Naive thymus-derived CD4-positive, alpha-beta T cell (primary cell): ENCODE measurements at regions of chr1 and their contacts with region 1.

Region 1: DNA sequence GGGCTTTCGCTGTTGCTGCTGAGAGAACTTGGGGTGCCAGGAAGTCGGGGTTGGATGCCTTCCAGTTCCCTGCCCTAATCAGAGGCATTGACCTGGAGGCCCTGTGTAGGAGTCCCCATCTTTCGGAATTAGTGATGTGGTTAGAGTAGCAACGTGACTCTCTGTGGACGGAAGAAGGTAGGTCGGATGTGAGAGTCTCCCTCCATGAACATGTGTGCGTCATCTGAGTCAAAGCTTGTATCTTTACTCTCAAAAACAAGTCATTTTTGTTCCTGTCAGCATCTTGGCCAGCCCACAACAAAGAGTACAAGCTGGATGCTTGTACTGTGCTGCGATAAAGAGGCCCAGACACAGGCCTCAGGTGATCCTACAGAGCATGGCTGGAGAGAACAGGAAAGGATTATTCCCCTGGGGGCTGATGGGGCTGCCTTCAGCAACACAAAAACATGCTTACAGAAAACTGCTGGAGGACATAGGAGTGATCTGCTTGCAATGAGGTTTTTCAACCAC is 31.0 kb upstream of the IL10 start:
- DNase-seq: peak; percentile 42 to 96 (median 93)
- ATAC-seq: peak; percentile 97
- H3K4me3 ChIP-seq: no peak overlapping the region
- H3K4me3 Mint-ChIP-seq: peak overlapping the region in 9 of 10 donors; percentile 32 to 71 (median 57)
- H3K27ac ChIP-seq: peak overlapping the region; percentile 81
- H3K27ac Mint-ChIP-seq: peak overlapping the region; percentile 83 to 99 (median 95)
- H3K4me1 ChIP-seq: peaks cover 34 to 41% of the 10 kb centered on the region in 2 donors
- H3K4me1 Mint-ChIP-seq: peaks cover 29 to 78% (median 77%) of the 10 kb centered on the region in 7 donors
- H3K27me3 ChIP-seq: no peaks in the 10 kb centered on the region
- H3K27me3 Mint-ChIP-seq: peaks cover 0 to 44% (median 0%) of the 10 kb centered on the region in 5 donors

Region 2: GRCh38 chr1:206674745-206675175 is 128.5 kb before region 1 on chr1:
- CTCF ChIA-PET with region 1: no interaction called
- POLR2A ChIA-PET with region 1: no interaction called
- intact Hi-C with region 1: no loop called
- DNase-seq: no peak
- ATAC-seq: no peak
- H3K4me3 ChIP-seq: no peak overlapping the region
- H3K4me3 Mint-ChIP-seq: no peak overlapping the region
- H3K27ac ChIP-seq: no peak overlapping the region
- H3K27ac Mint-ChIP-seq: no peak overlapping the region
- H3K4me1 ChIP-seq: no peaks in the 10 kb centered on the region
- H3K4me1 Mint-ChIP-seq: peaks cover 0 to 5% (median 0%) of the 10 kb centered on the region in 7 donors
- H3K27me3 ChIP-seq: no peaks in the 10 kb centered on the region
- H3K27me3 Mint-ChIP-seq: peaks cover 0 to 12% (median 5%) of the 10 kb centered on the region in 5 donors

Region 3: DNA sequence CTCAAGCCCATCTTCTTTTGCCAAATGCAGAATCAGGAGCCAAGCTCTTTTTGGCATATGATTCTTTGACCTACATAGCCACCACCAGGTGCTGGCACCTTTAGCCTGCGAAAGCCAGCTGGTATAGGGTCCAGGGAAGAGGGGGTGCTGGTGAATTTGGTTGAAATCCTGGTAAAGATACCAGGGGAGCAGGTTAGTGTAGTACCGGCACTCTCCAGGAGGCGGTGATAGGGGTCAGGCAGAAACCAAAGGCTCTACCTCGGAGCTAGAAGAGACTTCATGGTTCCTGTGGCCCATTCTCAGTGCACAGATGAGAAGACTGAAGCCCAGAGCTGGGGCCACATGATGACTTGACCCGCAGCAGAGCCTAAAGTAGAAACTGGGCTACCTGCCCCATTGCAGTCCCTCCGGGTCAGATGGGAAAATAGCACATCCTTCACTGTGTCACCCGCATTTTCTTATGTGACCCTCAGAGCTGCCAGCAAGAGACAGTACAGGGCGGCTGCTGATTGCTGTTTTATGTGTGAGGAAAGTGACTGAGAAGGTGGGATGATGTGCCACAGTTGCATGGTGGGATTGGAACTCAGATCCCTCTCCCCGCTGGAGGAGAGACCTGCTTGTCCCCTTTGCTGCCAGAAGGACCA is 68.7 kb before region 1 on chr1:
- CTCF ChIA-PET with region 1: interaction called, 329 read pairs
- POLR2A ChIA-PET with region 1: interaction called, 148 read pairs
- intact Hi-C with region 1: loop called (anchors 1 kb)
- DNase-seq: peak; percentile 63 to 87 (median 76)
- ATAC-seq: peak; percentile 80
- H3K4me3 ChIP-seq: no peak overlapping the region
- H3K4me3 Mint-ChIP-seq: peak overlapping the region in 4 of 10 donors; percentile 7 to 54 (median 26)
- H3K27ac ChIP-seq: no peak overlapping the region
- H3K27ac Mint-ChIP-seq: peak overlapping the region; percentile 53 to 95 (median 87)
- H3K4me1 ChIP-seq: peaks cover 49 to 50% of the 10 kb centered on the region in 2 donors
- H3K4me1 Mint-ChIP-seq: peaks cover 40 to 60% (median 56%) of the 10 kb centered on the region in 7 donors
- H3K27me3 ChIP-seq: no peaks in the 10 kb centered on the region
- H3K27me3 Mint-ChIP-seq: no peaks in the 10 kb centered on the region

Region 4: DNA sequence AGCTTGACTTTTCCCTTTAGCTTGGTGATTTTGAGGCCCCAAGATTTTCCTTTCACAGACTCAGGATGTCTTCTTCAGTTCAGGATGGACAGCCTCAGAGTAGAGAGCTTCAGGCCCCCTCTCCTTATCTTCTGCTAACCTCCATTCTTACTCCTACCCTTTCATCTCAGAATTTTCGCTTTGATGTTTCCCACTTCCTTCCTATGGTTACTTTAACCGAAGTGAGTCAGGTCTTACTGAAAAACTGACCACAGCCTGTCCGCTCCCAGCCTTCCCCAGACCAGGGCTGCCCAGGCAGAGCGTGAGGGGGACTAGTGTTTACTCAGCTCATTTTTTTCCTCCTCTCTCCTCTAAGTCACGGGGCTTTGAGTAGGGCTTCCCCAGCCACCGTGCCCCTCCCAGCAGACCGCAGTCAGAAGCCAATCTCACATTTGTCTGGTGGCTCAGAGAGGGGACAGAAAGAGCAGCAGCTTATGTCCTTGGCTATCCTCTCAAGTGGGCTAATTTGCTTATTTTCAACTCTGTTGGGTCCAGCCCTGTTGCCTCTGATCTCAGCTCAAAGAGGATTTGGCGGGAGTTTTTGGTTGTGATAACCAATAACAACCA is 36.9 kb before region 1 on chr1:
- CTCF ChIA-PET with region 1: interaction called, 7 read pairs
- POLR2A ChIA-PET with region 1: interaction called, 21 read pairs
- intact Hi-C with region 1: loop called (anchors 1 kb)
- DNase-seq: peak; percentile 43 to 76 (median 71)
- ATAC-seq: peak; percentile 91
- H3K4me3 ChIP-seq: peak overlapping the region; percentile 0
- H3K4me3 Mint-ChIP-seq: peak overlapping the region; percentile 52 to 85 (median 80)
- H3K27ac ChIP-seq: no peak overlapping the region
- H3K27ac Mint-ChIP-seq: peak overlapping the region; percentile 66 to 95 (median 76)
- H3K4me1 ChIP-seq: peaks cover 54 to 65% of the 10 kb centered on the region in 2 donors
- H3K4me1 Mint-ChIP-seq: peaks cover 48 to 80% (median 70%) of the 10 kb centered on the region in 7 donors
- H3K27me3 ChIP-seq: no peaks in the 10 kb centered on the region
- H3K27me3 Mint-ChIP-seq: peaks cover 0 to 44% (median 0%) of the 10 kb centered on the region in 5 donors

Region 5: GRCh38 chr1:206790502-206791250 is 12.6 kb before region 1 on chr1:
- CTCF ChIA-PET with region 1: interaction called, 6 read pairs
- POLR2A ChIA-PET with region 1: interaction called, 14 read pairs
- intact Hi-C with region 1: loop called in 1 of 2 experiments (anchors 1 kb)
- DNase-seq: no peak
- ATAC-seq: no peak
- H3K4me3 ChIP-seq: no peak overlapping the region
- H3K4me3 Mint-ChIP-seq: peak overlapping the region in 7 of 10 donors; percentile 22 to 67 (median 43)
- H3K27ac ChIP-seq: no peak overlapping the region
- H3K27ac Mint-ChIP-seq: peak overlapping the region in 4 of 9 donors; percentile 1 to 77 (median 26)
- H3K4me1 ChIP-seq: peaks cover 37 to 40% of the 10 kb centered on the region in 2 donors
- H3K4me1 Mint-ChIP-seq: peaks cover 35 to 71% (median 66%) of the 10 kb centered on the region in 7 donors
- H3K27me3 ChIP-seq: no peaks in the 10 kb centered on the region
- H3K27me3 Mint-ChIP-seq: peaks cover 0 to 62% (median 0%) of the 10 kb centered on the region in 5 donors

Region 6: DNA sequence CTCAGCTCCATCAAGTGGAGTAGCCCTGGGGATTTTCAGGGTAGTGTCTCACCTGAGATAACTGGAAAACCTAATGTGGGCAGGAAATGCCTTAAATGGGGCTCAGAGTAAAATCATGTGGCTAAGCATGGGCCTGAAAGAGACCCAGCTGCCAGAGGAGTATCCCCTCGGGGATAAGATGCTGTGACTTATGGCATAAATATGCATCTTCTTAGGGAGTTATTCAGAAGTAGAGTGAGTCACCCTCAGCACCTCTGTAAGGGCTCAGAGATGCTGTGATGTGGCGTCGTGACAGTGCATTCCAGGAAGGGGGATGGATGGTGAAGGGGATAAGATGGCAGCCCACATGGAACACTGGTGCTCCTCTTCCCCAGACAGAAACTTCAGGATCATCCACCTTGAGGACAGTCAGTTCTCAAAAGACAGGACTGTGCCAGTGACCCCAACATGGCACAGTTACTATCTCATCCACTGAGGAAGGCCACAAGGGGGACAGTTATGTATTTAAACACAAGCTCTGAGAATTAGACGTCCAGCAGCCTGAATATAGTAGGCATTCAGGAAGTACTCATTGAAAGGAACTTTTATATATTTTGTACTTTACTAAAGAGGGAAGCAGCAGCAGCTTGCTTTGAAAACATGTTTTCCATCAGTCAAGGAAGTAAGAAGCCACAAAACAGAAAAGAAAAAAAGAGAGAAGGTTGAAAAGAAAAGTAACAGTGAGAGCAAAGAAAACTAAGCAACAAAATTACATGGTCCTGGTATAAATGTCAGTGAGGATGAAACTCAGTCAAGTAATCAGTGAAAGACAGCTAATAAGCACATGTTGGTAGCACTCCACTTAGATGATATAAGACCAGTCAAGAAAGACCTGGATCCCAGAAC is 102.2 kb after region 1 on chr1:
- CTCF ChIA-PET with region 1: interaction called, 40 read pairs
- POLR2A ChIA-PET with region 1: interaction called, 17 read pairs
- intact Hi-C with region 1: no loop called
- DNase-seq: peak in 7 of 9 donors; percentile 38 to 64 (median 59)
- ATAC-seq: peak; percentile 32
- H3K4me3 ChIP-seq: peak overlapping the region; percentile 17
- H3K4me3 Mint-ChIP-seq: peak overlapping the region; percentile 60 to 88 (median 78)
- H3K27ac ChIP-seq: peak overlapping the region; percentile 69
- H3K27ac Mint-ChIP-seq: peak overlapping the region; percentile 79 to 98 (median 93)
- H3K4me1 ChIP-seq: peaks cover 28 to 72% of the 10 kb centered on the region in 2 donors
- H3K4me1 Mint-ChIP-seq: peaks cover 52 to 94% (median 86%) of the 10 kb centered on the region in 7 donors
- H3K27me3 ChIP-seq: no peaks in the 10 kb centered on the region
- H3K27me3 Mint-ChIP-seq: peaks cover 0 to 6% (median 0%) of the 10 kb centered on the region in 5 donors

Region 7: GRCh38 chr1:207052911-207053769 is 249.9 kb after region 1 on chr1 and contains the start of gene PFKFB2:
- CTCF ChIA-PET with region 1: no interaction called
- POLR2A ChIA-PET with region 1: no interaction called
- intact Hi-C with region 1: loop called in 1 of 2 experiments (anchors 5 kb)
- DNase-seq: peak; percentile 93 to 97 (median 96)
- ATAC-seq: peak; percentile 93
- H3K4me3 ChIP-seq: peak within 1 kb of the TSS; percentile 85
- H3K4me3 Mint-ChIP-seq: peak within 1 kb of the TSS; percentile 95 to 100 (median 98)
- H3K27ac ChIP-seq: peak within 1 kb of the TSS; percentile 72
- H3K27ac Mint-ChIP-seq: peak within 1 kb of the TSS; percentile 86 to 100 (median 97)
- H3K4me1 ChIP-seq: peaks cover 11 to 16% of the 10 kb centered on the region in 2 donors
- H3K4me1 Mint-ChIP-seq: peaks cover 25 to 54% (median 49%) of the 10 kb centered on the region in 7 donors
- H3K27me3 ChIP-seq: no peaks in the 10 kb centered on the region
- H3K27me3 Mint-ChIP-seq: peaks cover 0 to 12% (median 0%) of the 10 kb centered on the region in 5 donors
- total RNA-seq, gene PFKFB2: 2.3 to 4.6 (median 3.8) TPM